ENCODE measurements at regions of chr12 and their contacts with region 1.

Region 1: DNA sequence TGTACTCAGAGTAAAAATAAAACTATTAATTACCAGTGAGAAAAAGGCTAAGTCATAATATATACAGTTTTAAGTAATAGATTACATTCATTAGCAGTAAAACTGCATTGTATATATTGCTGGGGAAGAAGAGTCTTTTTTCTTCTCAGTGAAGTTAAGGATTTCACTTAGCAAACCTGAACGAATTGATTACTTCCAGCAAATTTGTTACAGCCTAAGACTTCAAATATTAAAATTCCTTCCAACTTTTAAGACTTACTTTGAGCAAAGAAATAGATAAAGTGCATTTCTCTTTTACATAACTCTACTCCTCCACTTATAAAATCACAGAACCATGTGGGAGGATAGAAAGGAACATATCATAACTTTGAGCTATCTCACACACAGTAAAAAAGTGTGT is 43.3 kb downstream of the PIK3C2G start:
- DNase-seq: no peak
- ATAC-seq: no peak
- H3K4me3 ChIP-seq: no peak overlapping the region
- H3K27ac ChIP-seq: no peak overlapping the region
- H3K4me1 ChIP-seq: no peaks in the 10 kb centered on the region
- H3K27me3 ChIP-seq: no peaks in the 10 kb centered on the region
- CTCF ChIP-seq: no peak
- EP300 ChIP-seq: no peak
- POLR2A ChIP-seq: no peak
- RAD21 ChIP-seq: no peak

Region 2: GRCh38 chr12:18267427-18267826 is 37.2 kb before region 1 on chr12:
- CTCF ChIA-PET with region 1: no interaction called
- POLR2A ChIA-PET with region 1: no interaction called
- in situ Hi-C with region 1: no loop called
- intact Hi-C with region 1: loop called (anchors 5 kb)
- DNase-seq: no peak
- ATAC-seq: no peak
- H3K4me3 ChIP-seq: no peak overlapping the region
- H3K27ac ChIP-seq: no peak overlapping the region
- H3K4me1 ChIP-seq: no peaks in the 10 kb centered on the region
- H3K27me3 ChIP-seq: no peaks in the 10 kb centered on the region
- CTCF ChIP-seq: no peak
- EP300 ChIP-seq: no peak
- POLR2A ChIP-seq: no peak
- RAD21 ChIP-seq: no peak

Region 3: DNA sequence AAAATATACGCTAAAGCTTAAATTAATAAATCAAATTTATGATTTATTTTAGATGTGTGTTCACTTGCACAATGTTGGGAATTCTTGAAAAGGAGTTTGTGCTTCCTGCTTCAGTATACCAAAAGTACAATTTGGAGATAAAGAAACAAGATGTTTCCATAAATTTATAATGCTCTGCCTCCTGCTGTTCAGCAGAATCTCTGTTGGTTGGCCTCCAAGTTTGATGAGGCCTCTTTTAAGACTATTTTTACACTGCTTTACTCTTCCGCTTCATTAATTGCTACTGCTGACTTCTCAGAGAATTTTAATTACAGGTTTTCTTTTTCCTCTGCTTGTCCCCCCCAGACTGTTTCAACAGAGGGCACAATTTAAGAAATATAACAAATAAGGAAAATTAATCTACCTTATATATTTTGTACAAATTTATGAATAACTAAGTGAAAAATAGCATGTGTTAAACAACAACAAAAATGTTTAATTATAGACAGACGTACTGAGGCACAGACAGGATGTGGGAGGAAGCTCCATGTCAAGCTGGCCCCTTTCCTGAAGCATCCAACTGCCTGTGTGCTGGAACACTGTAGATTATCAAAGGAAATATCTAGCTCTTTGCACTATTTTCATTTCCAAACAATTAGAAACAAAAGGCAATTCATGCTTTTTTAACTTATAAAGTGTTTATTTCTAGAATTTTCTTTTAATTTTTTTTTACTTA is 40.6 kb after region 1 on chr12:
- CTCF ChIA-PET with region 1: no interaction called
- POLR2A ChIA-PET with region 1: no interaction called
- in situ Hi-C with region 1: no loop called
- intact Hi-C with region 1: no loop called
- DNase-seq: no peak
- ATAC-seq: no peak
- H3K4me3 ChIP-seq: no peak overlapping the region
- H3K27ac ChIP-seq: no peak overlapping the region
- H3K4me1 ChIP-seq: no peaks in the 10 kb centered on the region
- H3K27me3 ChIP-seq: no peaks in the 10 kb centered on the region
- CTCF ChIP-seq: no peak
- EP300 ChIP-seq: no peak
- POLR2A ChIP-seq: no peak
- RAD21 ChIP-seq: no peak